Panc1 (cell line): ENCODE measurements at regions of chr17 and their contacts with region 1.

Region 1: DNA sequence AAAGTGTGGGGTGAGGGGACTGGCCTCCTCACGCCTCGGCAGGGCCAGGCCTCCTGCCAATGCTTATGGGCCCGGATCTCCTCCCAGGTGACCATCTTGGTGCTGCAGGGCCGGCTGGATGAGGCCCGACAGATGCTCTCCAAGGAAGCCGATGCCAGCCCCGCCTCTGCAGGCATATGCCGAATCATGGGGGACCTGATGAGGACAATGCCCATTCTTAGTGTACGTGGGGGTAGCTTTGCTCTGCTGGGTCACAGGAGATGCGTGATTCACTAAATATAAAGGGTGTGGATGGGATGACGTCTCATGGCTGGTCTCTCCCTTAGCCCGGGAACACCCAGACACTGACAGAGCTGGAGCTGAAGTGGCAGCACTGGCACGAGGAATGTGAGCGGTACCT is 19.5 kb downstream of the NUP85 start:
- DNase-seq: no peak
- ATAC-seq: no peak
- H3K4me3 ChIP-seq: no peak overlapping the region
- H3K27ac ChIP-seq: no peak overlapping the region
- H3K4me1 ChIP-seq: no peaks in the 10 kb centered on the region
- H3K27me3 ChIP-seq: no peaks in the 10 kb centered on the region
- CTCF ChIP-seq: no peak

Region 2: DNA sequence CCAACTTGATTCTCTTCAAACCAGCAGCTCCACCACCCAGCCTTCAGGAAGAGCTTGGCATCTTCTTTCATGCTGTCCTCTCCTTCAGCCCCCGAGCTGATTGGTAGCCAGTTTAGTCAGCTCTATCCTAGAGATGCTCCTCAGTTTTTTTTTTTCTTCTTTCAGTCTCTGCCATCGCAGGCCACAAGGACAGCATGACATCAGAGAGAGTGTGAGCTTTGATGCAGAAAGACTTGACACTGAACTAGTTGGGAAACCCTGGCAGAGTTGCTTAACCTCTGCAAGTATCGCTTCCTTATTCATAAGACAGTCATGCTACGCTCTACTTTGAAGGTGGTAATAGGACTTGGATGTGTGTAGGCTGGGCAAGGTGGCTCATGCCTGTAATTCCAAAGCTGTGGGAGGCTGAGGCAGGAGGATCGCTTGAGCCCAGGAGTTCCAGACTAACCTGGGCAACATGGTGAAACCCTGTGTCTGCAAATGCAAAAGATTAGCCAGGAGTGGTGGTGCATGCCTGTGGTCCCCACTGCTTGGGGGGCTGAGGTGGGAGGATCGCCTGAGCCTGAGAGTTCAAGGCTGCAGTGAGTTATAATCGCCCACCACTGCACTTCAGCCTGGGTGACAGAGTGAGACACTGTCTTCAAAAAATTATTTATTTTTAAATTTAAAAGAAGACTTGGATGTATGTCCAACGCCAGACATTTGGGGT is 696.4 kb before region 1 on chr17:
- CTCF ChIA-PET with region 1: no interaction called
- POLR2A ChIA-PET with region 1: no interaction called
- in situ Hi-C with region 1: no loop called
- intact Hi-C with region 1: no loop called
- DNase-seq: no peak
- ATAC-seq: no peak
- H3K4me3 ChIP-seq: no peak overlapping the region
- H3K27ac ChIP-seq: no peak overlapping the region
- H3K4me1 ChIP-seq: no peaks in the 10 kb centered on the region; the same call in 1 of the 2 replicates
- H3K27me3 ChIP-seq: peaks cover 17% of the 10 kb centered on the region
- CTCF ChIP-seq: no peak

Region 3: DNA sequence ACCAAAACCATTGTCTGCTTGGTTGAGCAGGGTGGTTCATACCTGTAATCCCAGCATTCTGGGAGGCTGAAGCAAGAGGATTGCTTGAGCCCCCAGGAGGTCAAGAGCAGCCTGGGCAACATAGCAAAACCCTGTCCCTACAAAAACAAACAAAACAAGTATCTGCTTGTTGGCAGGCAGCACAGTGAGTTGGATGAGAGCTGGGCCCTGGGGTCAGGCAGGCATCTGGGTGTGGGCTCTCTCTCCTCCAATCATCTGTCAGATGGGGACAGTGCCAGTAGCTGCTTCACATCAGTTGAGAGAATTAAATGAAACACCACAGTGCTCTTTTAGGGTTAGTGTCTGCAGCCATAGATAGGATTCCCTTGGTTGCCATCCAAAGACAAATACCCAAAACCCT is 109.5 kb before region 1 on chr17:
- CTCF ChIA-PET with region 1: interaction called, 5 read pairs
- POLR2A ChIA-PET with region 1: interaction called, 11 read pairs
- in situ Hi-C with region 1: no loop called
- intact Hi-C with region 1: no loop called
- DNase-seq: no peak
- ATAC-seq: no peak
- H3K4me3 ChIP-seq: no peak overlapping the region
- H3K27ac ChIP-seq: no peak overlapping the region
- H3K4me1 ChIP-seq: peaks cover 19% of the 10 kb centered on the region
- H3K27me3 ChIP-seq: no peaks in the 10 kb centered on the region
- CTCF ChIP-seq: no peak

Region 4: GRCh38 chr17:75250009-75250471 is 25.0 kb after region 1 on chr17:
- CTCF ChIA-PET with region 1: no interaction called
- POLR2A ChIA-PET with region 1: no interaction called
- in situ Hi-C with region 1: no loop called
- intact Hi-C with region 1: no loop called
- DNase-seq: no peak
- ATAC-seq: peak; percentile 32; the same call in 1 of the 2 replicates
- H3K4me3 ChIP-seq: no peak overlapping the region
- H3K27ac ChIP-seq: no peak overlapping the region
- H3K4me1 ChIP-seq: no peaks in the 10 kb centered on the region
- H3K27me3 ChIP-seq: no peaks in the 10 kb centered on the region
- CTCF ChIP-seq: no peak

Region 5: DNA sequence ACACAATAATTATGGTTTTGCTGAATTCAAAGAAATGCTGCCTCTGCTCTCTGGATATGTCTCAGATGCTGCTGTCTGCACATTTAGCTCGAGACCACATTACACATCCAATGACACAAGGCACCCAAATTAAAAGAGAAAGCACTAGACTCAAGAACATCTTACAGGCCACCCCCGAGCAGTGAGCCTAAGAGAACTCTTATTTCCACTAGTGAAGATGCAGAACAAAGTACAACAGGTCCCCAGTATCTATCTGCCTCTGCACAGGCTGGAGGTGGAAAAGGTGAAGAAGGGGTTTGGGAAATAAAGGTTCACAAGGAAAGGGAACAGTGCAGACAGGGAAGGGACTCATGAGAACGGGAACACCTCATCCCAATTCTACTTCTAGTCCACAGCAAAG is 147.0 kb after region 1 on chr17:
- CTCF ChIA-PET with region 1: no interaction called
- POLR2A ChIA-PET with region 1: no interaction called
- in situ Hi-C with region 1: no loop called
- intact Hi-C with region 1: no loop called
- DNase-seq: no peak
- ATAC-seq: no peak
- H3K4me3 ChIP-seq: no peak overlapping the region
- H3K27ac ChIP-seq: no peak overlapping the region
- H3K4me1 ChIP-seq: peaks cover 11% of the 10 kb centered on the region; the same call in 1 of the 2 replicates
- H3K27me3 ChIP-seq: no peaks in the 10 kb centered on the region
- CTCF ChIP-seq: no peak